ENCODE measurements at regions of chr1 and their contacts with region 1.

Region 1: DNA sequence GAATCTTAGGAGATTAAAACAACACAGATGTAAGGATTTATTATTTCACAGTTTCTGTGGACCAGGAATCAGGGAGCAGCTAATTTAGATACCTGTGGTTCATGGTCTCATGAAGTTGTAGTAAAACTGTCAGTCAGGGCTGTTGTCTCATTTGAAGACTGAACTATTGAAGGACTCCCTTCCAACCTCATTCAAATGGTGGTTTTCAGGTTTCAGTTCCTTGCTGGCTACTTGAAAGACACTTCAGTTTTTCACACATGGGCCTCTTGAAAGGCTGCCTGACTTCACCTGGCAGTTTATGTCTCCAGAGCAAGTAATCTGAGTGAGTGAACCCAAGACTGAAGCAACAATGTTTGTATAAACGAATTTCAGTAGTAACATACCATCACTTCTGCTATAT is 915.9 kb downstream of the PLA2G4A start:
- DNase-seq: no peak
- ATAC-seq: no peak
- H3K4me3 ChIP-seq: no peak overlapping the region
- H3K4me3 Mint-ChIP-seq: no peak overlapping the region
- H3K27ac ChIP-seq: no peak overlapping the region
- H3K27ac Mint-ChIP-seq: no peak overlapping the region
- H3K4me1 ChIP-seq: no peaks in the 10 kb centered on the region
- H3K4me1 Mint-ChIP-seq: no peaks in the 10 kb centered on the region
- H3K27me3 ChIP-seq: no peaks in the 10 kb centered on the region
- H3K27me3 Mint-ChIP-seq: no peaks in the 10 kb centered on the region
- CTCF ChIP-seq: no peak

Region 2: DNA sequence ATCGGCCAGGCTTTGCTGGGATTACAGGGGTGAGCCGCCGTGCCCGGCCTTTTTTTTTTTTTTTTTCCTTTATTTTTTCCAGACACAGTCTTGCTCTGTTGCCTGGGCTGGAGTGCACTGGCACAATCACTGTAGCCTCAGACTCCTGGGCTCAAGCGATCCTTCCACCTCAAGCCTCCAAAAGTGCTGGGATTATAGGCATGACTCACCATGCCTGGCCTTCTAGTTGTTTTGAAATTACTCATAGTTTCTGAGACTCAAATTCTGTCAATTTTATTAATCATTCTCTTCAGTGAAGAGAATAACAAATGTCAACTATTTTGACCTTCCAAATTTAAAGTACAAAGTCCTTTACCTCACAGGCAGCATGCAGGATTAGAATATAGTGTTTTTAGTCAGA is 541.4 kb before region 1 on chr1:
- CTCF ChIA-PET with region 1: no interaction called
- POLR2A ChIA-PET with region 1: no interaction called
- intact Hi-C with region 1: no loop called
- DNase-seq: no peak
- ATAC-seq: no peak
- H3K4me3 ChIP-seq: no peak overlapping the region
- H3K4me3 Mint-ChIP-seq: no peak overlapping the region
- H3K27ac ChIP-seq: no peak overlapping the region
- H3K27ac Mint-ChIP-seq: no peak overlapping the region
- H3K4me1 ChIP-seq: no peaks in the 10 kb centered on the region
- H3K4me1 Mint-ChIP-seq: no peaks in the 10 kb centered on the region
- H3K27me3 ChIP-seq: no peaks in the 10 kb centered on the region
- H3K27me3 Mint-ChIP-seq: no peaks in the 10 kb centered on the region
- CTCF ChIP-seq: no peak

Region 3: DNA sequence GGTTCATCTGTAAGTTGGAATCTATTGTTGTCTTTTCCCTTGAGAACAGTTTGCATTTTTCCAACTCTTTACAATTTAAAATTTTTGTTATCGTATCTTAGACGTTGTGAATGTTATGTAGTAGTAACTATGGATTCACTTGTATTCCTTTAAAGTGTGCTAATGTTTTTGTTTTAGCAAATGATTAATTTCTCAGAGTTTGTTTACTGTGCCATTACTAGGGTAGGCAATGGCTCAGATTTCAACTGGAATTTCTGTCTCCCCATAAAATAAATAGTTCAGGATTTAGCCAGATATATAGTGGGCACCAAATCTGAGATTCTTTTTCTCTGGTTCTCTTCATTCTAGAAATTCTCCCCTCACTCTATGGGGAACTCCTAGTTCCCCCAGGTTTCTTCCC is 19.4 kb before region 1 on chr1:
- CTCF ChIA-PET with region 1: no interaction called
- POLR2A ChIA-PET with region 1: no interaction called
- intact Hi-C with region 1: no loop called
- DNase-seq: no peak
- ATAC-seq: no peak
- H3K4me3 ChIP-seq: no peak overlapping the region
- H3K4me3 Mint-ChIP-seq: no peak overlapping the region
- H3K27ac ChIP-seq: no peak overlapping the region
- H3K27ac Mint-ChIP-seq: no peak overlapping the region
- H3K4me1 ChIP-seq: no peaks in the 10 kb centered on the region
- H3K4me1 Mint-ChIP-seq: no peaks in the 10 kb centered on the region
- H3K27me3 ChIP-seq: no peaks in the 10 kb centered on the region
- H3K27me3 Mint-ChIP-seq: no peaks in the 10 kb centered on the region
- CTCF ChIP-seq: no peak

Region 4: GRCh38 chr1:187755536-187755935 is 10.9 kb after region 1 on chr1:
- CTCF ChIA-PET with region 1: no interaction called
- POLR2A ChIA-PET with region 1: no interaction called
- intact Hi-C with region 1: loop called (anchors 1 kb)
- DNase-seq: no peak
- ATAC-seq: no peak
- H3K4me3 ChIP-seq: no peak overlapping the region
- H3K4me3 Mint-ChIP-seq: no peak overlapping the region
- H3K27ac ChIP-seq: no peak overlapping the region
- H3K27ac Mint-ChIP-seq: no peak overlapping the region
- H3K4me1 ChIP-seq: no peaks in the 10 kb centered on the region
- H3K4me1 Mint-ChIP-seq: no peaks in the 10 kb centered on the region
- H3K27me3 ChIP-seq: no peaks in the 10 kb centered on the region
- H3K27me3 Mint-ChIP-seq: no peaks in the 10 kb centered on the region
- CTCF ChIP-seq: no peak

Measured in CD8-positive, alpha-beta T cell (primary cell).